Dendritic cell treated with granulocyte-macrophage colony-stimulating factor and Interleukin-4, amounts not matched to agents 40 ng/mL and 50 ng/mL, for 4 days (primary cell): ENCODE measurements at regions of chr6 and their contacts with region 1.

Region 1: GRCh38 chr6:6494677-6495076 is 93.8 kb upstream of the LY86 start:
- H3K4me3 Mint-ChIP-seq: peak overlapping the region; percentile 45
- H3K27ac Mint-ChIP-seq: peak overlapping the region; percentile 83
- H3K4me1 Mint-ChIP-seq: peaks cover 52% of the 10 kb centered on the region
- H3K27me3 Mint-ChIP-seq: no peaks in the 10 kb centered on the region

Region 2: GRCh38 chr6:6315660-6316059 is 179.0 kb before region 1 on chr6:
- intact Hi-C with region 1: loop called (anchors 1 kb)
- H3K4me3 Mint-ChIP-seq: peak overlapping the region; percentile 86
- H3K27ac Mint-ChIP-seq: peak overlapping the region; percentile 91
- H3K4me1 Mint-ChIP-seq: peaks cover 28% of the 10 kb centered on the region
- H3K27me3 Mint-ChIP-seq: no peaks in the 10 kb centered on the region

Region 3: GRCh38 chr6:6331946-6332601 is 162.6 kb before region 1 on chr6:
- intact Hi-C with region 1: loop called (anchors 5 kb)
- H3K4me3 Mint-ChIP-seq: peak overlapping the region; percentile 48
- H3K27ac Mint-ChIP-seq: peak overlapping the region; percentile 95
- H3K4me1 Mint-ChIP-seq: peaks cover 70% of the 10 kb centered on the region
- H3K27me3 Mint-ChIP-seq: no peaks in the 10 kb centered on the region

Region 4: GRCh38 chr6:6420107-6420506 is 74.6 kb before region 1 on chr6:
- intact Hi-C with region 1: loop called (anchors 10 kb)
- H3K4me3 Mint-ChIP-seq: no peak overlapping the region
- H3K27ac Mint-ChIP-seq: no peak overlapping the region
- H3K4me1 Mint-ChIP-seq: peaks cover 20% of the 10 kb centered on the region
- H3K27me3 Mint-ChIP-seq: no peaks in the 10 kb centered on the region